CD4-positive, alpha-beta memory T cell (primary cell): ENCODE measurements at regions of chr6 and their contacts with region 1.

Region 1: GRCh38 chr6:32153564-32154513 is at the start of gene PPT2:
- DNase-seq: peak; percentile 62 to 84 (median 70)
- H3K4me3 ChIP-seq: peak within 1 kb of the TSS; percentile 78 to 98
- H3K4me3 Mint-ChIP-seq: peak within 1 kb of the TSS; percentile 95 to 100 (median 98)
- H3K27ac ChIP-seq: peak within 1 kb of the TSS; percentile 42
- H3K27ac Mint-ChIP-seq: peak within 1 kb of the TSS; percentile 92 to 98 (median 94)
- H3K4me1 ChIP-seq: peaks cover 16% of the 10 kb centered on the region
- H3K4me1 Mint-ChIP-seq: peaks cover 30 to 58% (median 41%) of the 10 kb centered on the region in 4 donors
- H3K27me3 ChIP-seq: peaks cover under 1% of the 10 kb centered on the region
- H3K27me3 Mint-ChIP-seq: peaks cover 15 to 25% of the 10 kb centered on the region in 2 donors
- total RNA-seq, gene PPT2: 12.7 to 15.4 TPM

Region 2: GRCh38 chr6:32047850-32048766 is 105.7 kb before region 1 on chr6:
- CTCF ChIA-PET with region 1: interaction called, 7 read pairs
- POLR2A ChIA-PET with region 1: no interaction called
- intact Hi-C with region 1: loop called (anchors 10 kb)
- DNase-seq: peak in 4 of 5 donors; percentile 52 to 65 (median 56)
- H3K4me3 ChIP-seq: no peak overlapping the region
- H3K4me3 Mint-ChIP-seq: peak overlapping the region in 1 of 8 donors; percentile 64
- H3K27ac ChIP-seq: no peak overlapping the region
- H3K27ac Mint-ChIP-seq: peak overlapping the region in 1 of 7 donors; percentile 43
- H3K4me1 ChIP-seq: peaks cover 10% of the 10 kb centered on the region
- H3K4me1 Mint-ChIP-seq: peaks cover 3 to 8% (median 5%) of the 10 kb centered on the region in 4 donors
- H3K27me3 ChIP-seq: no peaks in the 10 kb centered on the region
- H3K27me3 Mint-ChIP-seq: peaks cover 0 to 5% of the 10 kb centered on the region in 2 donors

Region 3: GRCh38 chr6:32087574-32088486 is 66.0 kb before region 1 on chr6:
- CTCF ChIA-PET with region 1: interaction called, 9 read pairs
- POLR2A ChIA-PET with region 1: no interaction called
- intact Hi-C with region 1: loop called (anchors 1 kb)
- DNase-seq: peak; percentile 51 to 64 (median 60)
- H3K4me3 ChIP-seq: no peak overlapping the region
- H3K4me3 Mint-ChIP-seq: peak overlapping the region in 1 of 8 donors; percentile 52
- H3K27ac ChIP-seq: no peak overlapping the region
- H3K27ac Mint-ChIP-seq: peak overlapping the region in 1 of 7 donors; percentile 35
- H3K4me1 ChIP-seq: no peaks in the 10 kb centered on the region
- H3K4me1 Mint-ChIP-seq: peaks cover 1 to 21% (median 3%) of the 10 kb centered on the region in 4 donors
- H3K27me3 ChIP-seq: peaks cover 16% of the 10 kb centered on the region
- H3K27me3 Mint-ChIP-seq: peaks cover 14 to 19% of the 10 kb centered on the region in 2 donors

Region 4: DNA sequence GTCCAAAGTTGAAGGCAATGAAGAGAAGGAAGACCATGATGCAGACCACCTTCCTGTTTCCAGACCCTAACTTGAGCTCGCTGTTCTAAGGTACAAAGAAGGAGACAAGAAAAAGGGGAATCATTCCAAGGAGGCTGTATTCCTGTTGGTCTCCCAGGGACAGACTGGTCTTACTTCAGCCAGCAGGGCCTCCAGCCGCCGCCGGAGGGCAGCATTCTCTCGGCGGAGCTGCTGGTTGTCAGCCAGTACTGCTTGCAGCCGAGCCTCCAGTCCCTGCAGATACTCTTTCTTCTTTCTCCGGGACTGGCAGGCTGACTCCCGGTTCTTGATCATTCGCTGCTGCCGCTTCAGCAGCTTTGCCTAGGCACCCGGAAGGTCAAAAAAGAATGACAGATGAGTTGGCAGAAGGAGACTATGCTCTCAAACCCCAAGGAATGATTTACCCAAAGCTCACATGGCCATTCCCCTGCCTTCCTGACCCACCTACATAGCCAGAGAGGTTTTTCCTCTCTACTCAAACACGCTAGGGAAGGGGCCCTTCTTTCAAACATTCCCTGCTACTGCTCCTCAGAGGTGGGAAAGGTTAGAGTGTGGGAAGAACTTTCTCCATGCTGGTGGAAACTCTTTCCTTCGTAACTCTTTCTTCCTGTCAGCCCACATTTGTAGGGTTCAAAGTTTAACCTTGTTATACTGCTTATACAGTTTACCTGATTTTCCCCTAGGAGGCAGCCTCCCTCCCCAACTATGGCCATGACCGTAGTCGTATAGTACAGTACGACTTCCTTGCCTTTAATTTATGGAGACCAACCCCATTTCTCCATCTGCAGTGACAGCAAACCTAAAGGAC is 34.8 kb before region 1 on chr6:
- CTCF ChIA-PET with region 1: interaction called, 6 read pairs
- POLR2A ChIA-PET with region 1: interaction called, 3 read pairs
- intact Hi-C with region 1: loop called (anchors 1 kb)
- DNase-seq: peak in 4 of 5 donors; percentile 59 to 65 (median 63)
- H3K4me3 ChIP-seq: no peak overlapping the region
- H3K4me3 Mint-ChIP-seq: no peak overlapping the region
- H3K27ac ChIP-seq: no peak overlapping the region
- H3K27ac Mint-ChIP-seq: peak overlapping the region in 6 of 7 donors; percentile 47 to 90 (median 72)
- H3K4me1 ChIP-seq: peaks cover 8% of the 10 kb centered on the region
- H3K4me1 Mint-ChIP-seq: peaks cover 3 to 19% (median 11%) of the 10 kb centered on the region in 4 donors
- H3K27me3 ChIP-seq: no peaks in the 10 kb centered on the region
- H3K27me3 Mint-ChIP-seq: no peaks in the 10 kb centered on the region

Region 5: GRCh38 chr6:32177788-32178546 is 24.1 kb after region 1 on chr6 and contains the start of gene RNF5:
- CTCF ChIA-PET with region 1: no interaction called
- POLR2A ChIA-PET with region 1: interaction called, 5 read pairs
- intact Hi-C with region 1: loop called (anchors 1 kb)
- DNase-seq: peak; percentile 96 to 99 (median 98)
- H3K4me3 ChIP-seq: peak within 1 kb of the TSS; percentile 74 to 87
- H3K4me3 Mint-ChIP-seq: peak within 1 kb of the TSS; percentile 92 to 100 (median 96)
- H3K27ac ChIP-seq: peak within 1 kb of the TSS; percentile 91
- H3K27ac Mint-ChIP-seq: peak within 1 kb of the TSS; percentile 97 to 100 (median 99)
- H3K4me1 ChIP-seq: peaks cover 79% of the 10 kb centered on the region
- H3K4me1 Mint-ChIP-seq: peaks cover 50 to 84% (median 66%) of the 10 kb centered on the region in 4 donors
- H3K27me3 ChIP-seq: no peaks in the 10 kb centered on the region
- H3K27me3 Mint-ChIP-seq: no peaks in the 10 kb centered on the region
- total RNA-seq, gene RNF5: 44.2 to 47.7 TPM